Mammary epithelial cell (primary cell): ENCODE measurements at regions of chr12 and their contacts with region 1.

Region 1: GRCh38 chr12:119375075-119375882 is 40.8 kb downstream of the CCDC60 start:
- DNase-seq: no peak
- H3K4me3 ChIP-seq: no peak overlapping the region
- H3K27ac ChIP-seq: no peak overlapping the region
- H3K4me1 ChIP-seq: no peaks in the 10 kb centered on the region
- H3K27me3 ChIP-seq: no peaks in the 10 kb centered on the region
- CTCF ChIP-seq: no peak

Region 2: DNA sequence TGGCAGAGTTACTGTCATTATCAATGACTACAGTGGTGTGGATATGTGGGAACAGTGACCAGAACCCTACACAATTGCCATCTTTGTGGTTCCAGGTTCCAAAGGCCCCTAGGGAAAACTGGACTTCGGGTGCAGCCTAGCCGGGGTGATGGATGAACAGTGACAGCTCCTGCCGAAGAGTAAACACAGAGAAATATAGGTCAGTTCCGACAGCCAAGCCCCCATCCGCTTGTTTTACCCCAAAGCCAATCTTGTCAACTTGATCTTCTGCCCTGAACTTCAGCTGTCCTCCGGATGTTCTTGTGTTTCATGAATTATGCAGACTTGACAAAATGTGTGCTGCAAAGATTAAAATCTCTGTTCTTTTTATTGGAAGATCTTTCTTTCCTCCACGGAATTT is 594.3 kb before region 1 on chr12:
- CTCF ChIA-PET with region 1: no interaction called
- dilution Hi-C with region 1: loop called (anchors 5 kb)
- in situ Hi-C with region 1: no loop called
- intact Hi-C with region 1: no loop called
- DNase-seq: no peak
- H3K4me3 ChIP-seq: no peak overlapping the region
- H3K27ac ChIP-seq: no peak overlapping the region
- H3K4me1 ChIP-seq: no peaks in the 10 kb centered on the region
- H3K27me3 ChIP-seq: no peaks in the 10 kb centered on the region
- CTCF ChIP-seq: no peak

Region 3: DNA sequence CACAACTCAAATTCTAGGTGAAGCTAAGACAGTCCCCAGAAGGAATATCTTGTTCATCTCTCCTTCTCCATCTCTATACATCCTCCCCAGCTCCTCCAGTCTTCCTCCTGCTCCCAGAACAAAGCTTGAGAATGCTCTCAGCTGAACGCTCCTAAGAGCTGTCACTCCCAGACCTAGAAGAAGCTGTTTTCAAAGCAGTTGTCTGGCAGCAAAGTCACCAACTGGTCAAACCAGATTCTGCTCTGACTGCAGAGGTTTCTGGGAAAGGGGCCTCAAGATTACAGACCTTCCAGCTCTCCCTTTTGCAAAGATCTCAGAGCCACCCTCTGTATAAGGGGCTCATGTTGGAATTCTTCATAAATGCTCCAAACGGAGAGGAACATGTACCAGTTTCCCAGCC is 206.1 kb before region 1 on chr12:
- CTCF ChIA-PET with region 1: no interaction called
- dilution Hi-C with region 1: no loop called
- in situ Hi-C with region 1: no loop called
- intact Hi-C with region 1: no loop called
- DNase-seq: no peak
- H3K4me3 ChIP-seq: no peak overlapping the region
- H3K27ac ChIP-seq: no peak overlapping the region
- H3K4me1 ChIP-seq: no peaks in the 10 kb centered on the region
- H3K27me3 ChIP-seq: no peaks in the 10 kb centered on the region
- CTCF ChIP-seq: no peak

Region 4: GRCh38 chr12:119423285-119423684 is 48.0 kb after region 1 on chr12:
- CTCF ChIA-PET with region 1: no interaction called
- dilution Hi-C with region 1: no loop called
- in situ Hi-C with region 1: no loop called
- intact Hi-C with region 1: no loop called
- DNase-seq: no peak
- H3K4me3 ChIP-seq: no peak overlapping the region
- H3K27ac ChIP-seq: no peak overlapping the region
- H3K4me1 ChIP-seq: no peaks in the 10 kb centered on the region
- H3K27me3 ChIP-seq: no peaks in the 10 kb centered on the region
- CTCF ChIP-seq: no peak